ENCODE measurements at regions of chr7 and their contacts with region 1.

Region 1: GRCh38 chr7:47266131-47266706 is 315.7 kb downstream of the TNS3 start:
- DNase-seq: peak; percentile 49 to 73
- H3K4me3 ChIP-seq: no peak overlapping the region
- H3K27ac ChIP-seq: no peak overlapping the region
- H3K4me1 ChIP-seq: peaks cover 10% of the 10 kb centered on the region
- H3K27me3 ChIP-seq: no peaks in the 10 kb centered on the region
- CTCF ChIP-seq: peak; percentile 100

Region 2: DNA sequence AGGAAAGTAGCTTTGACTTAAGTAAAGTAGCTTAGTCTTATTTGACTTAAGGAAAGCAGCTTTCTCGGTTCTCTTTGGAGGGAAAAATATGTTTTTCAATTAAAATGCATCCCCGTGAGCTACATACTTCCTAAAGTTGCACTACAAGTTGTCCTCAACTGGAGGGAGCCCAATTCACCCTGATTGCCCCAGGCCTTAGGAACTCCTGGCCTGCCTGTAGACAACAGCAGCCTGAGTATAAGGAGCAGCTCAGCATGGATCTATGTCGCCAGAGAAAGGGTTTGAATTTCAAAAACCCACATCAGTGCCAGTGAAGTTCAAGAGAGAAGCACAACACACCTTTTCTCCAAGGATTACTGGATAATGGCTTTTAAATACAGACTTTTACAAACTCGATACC is 456.3 kb before region 1 on chr7:
- CTCF ChIA-PET with region 1: no interaction called
- POLR2A ChIA-PET with region 1: no interaction called
- intact Hi-C with region 1: no loop called
- DNase-seq: no peak
- H3K4me3 ChIP-seq: no peak overlapping the region
- H3K27ac ChIP-seq: no peak overlapping the region
- H3K4me1 ChIP-seq: no peaks in the 10 kb centered on the region; the same call in 1 of the 2 replicates
- H3K27me3 ChIP-seq: no peaks in the 10 kb centered on the region
- CTCF ChIP-seq: no peak

Region 3: GRCh38 chr7:47153076-47153475 is 113.1 kb before region 1 on chr7:
- CTCF ChIA-PET with region 1: no interaction called
- POLR2A ChIA-PET with region 1: no interaction called
- intact Hi-C with region 1: no loop called
- DNase-seq: peak; percentile 49 to 77
- H3K4me3 ChIP-seq: no peak overlapping the region
- H3K27ac ChIP-seq: no peak overlapping the region
- H3K4me1 ChIP-seq: peaks cover 14% of the 10 kb centered on the region
- H3K27me3 ChIP-seq: no peaks in the 10 kb centered on the region
- CTCF ChIP-seq: no peak

Region 4: DNA sequence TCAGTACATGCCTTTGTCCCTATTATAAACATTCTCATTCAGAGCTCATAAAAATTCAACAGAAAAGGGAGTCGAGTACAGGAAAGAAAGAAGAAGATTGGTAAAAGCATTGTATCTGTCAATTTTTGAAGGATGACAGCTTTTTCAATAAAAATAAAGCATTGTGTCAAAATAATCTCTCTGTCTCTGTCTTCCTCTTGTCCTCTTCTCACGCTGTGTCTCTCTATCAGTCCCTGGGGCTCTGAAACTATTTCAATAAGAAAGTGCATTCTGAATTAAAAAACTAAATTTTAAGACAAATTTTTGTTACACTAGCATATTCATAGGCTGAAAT is 67.3 kb after region 1 on chr7:
- CTCF ChIA-PET with region 1: no interaction called
- POLR2A ChIA-PET with region 1: no interaction called
- intact Hi-C with region 1: no loop called
- DNase-seq: no peak
- H3K4me3 ChIP-seq: no peak overlapping the region
- H3K27ac ChIP-seq: no peak overlapping the region
- H3K4me1 ChIP-seq: no peaks in the 10 kb centered on the region
- H3K27me3 ChIP-seq: no peaks in the 10 kb centered on the region
- CTCF ChIP-seq: no peak

Region 5: DNA sequence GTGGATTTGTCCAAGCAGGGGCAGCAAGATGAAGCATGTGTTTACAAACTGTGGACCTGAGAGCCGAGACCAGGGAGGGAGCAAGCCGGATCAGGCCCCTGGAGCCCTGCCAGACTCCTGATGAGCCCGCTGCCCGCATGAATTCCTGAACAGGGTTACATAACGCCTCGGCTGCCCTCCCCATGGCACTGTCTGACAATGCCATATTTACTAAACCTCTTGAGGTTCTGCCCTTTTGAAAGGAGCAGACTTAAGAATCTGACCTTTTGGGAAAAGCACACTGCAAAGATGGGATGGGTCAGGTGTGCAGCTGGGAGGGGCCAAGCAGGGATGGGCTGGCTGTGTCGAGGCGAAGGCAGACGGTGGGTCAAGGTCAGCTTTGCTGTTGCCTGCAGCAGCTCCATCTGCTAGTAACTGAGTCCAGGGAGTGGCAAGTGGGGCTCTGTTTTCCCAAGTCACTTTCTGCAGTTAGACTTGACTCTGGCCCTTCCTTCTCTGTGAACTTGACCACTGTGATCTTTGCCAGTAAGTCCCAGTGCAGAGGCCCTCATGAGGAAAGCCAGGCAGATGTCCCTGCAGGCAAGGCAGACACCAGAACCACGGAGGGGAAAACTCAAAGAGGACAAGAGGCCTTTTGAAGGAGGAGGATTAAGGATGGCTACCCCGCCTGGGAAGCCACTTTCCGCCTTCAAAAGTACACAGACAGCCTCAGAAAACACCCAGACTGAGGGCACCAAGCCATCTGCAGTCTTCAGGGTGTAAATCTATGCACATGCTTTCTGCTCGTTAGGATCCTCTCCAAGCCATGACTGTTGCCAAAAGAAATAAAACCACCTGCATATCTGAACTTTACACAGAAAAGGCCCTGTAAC is 139.9 kb after region 1 on chr7:
- CTCF ChIA-PET with region 1: interaction called, 3 read pairs
- POLR2A ChIA-PET with region 1: no interaction called
- intact Hi-C with region 1: loop called (anchors 10 kb)
- DNase-seq: peak in 1 of 2 experiments; percentile 87
- H3K4me3 ChIP-seq: no peak overlapping the region
- H3K27ac ChIP-seq: no peak overlapping the region
- H3K4me1 ChIP-seq: no peaks in the 10 kb centered on the region
- H3K27me3 ChIP-seq: no peaks in the 10 kb centered on the region
- CTCF ChIP-seq: no peak

Region 6: DNA sequence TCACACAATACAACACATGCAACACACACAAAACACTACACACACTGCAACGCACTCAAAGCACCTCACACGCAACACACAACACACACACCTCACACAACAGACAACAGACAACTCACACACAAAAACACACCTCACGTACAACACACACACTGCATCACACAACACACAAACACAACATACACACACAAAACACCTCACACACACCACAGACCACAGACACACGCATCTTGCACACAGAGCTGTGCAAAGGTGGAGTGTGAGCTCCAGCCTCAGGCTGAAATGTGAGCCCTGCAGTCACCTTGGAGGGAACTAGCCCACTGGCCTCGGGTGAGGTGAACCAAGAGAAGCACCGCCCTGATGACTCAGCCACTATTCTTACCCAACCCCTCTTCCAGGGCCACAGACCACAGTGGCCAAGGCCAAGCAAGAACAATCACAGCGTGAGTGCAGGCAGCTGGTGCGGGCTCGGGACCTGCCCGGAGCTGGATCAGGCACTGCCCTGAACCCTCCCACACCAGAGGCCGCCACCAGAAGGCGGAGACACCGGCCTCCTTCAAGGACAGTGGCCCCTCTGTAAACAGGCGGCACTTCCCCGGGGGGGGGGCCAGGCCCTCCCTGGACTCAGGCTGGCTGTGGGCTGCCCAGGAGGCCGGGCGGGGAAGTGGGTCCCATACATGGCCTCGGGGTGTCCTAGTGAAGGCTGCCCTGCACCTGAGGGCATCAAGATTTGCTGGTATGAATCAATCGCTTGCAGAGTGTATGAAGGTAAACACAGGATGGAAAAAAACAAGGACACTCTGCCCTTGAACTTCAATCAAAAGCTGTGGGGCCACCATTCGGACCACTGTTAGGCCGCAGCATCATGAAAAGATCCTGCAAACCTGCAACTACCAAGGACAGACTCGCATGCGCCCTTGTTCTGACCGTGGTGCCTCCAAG is 209.0 kb after region 1 on chr7:
- CTCF ChIA-PET with region 1: interaction called, 4 read pairs
- POLR2A ChIA-PET with region 1: no interaction called
- intact Hi-C with region 1: loop called (anchors 1 kb)
- DNase-seq: peak; percentile 99 to 100
- H3K4me3 ChIP-seq: peak overlapping the region; percentile 16; the same call in 1 of the 2 replicates
- H3K27ac ChIP-seq: peak overlapping the region; percentile 87
- H3K4me1 ChIP-seq: peaks cover 58% of the 10 kb centered on the region
- H3K27me3 ChIP-seq: no peaks in the 10 kb centered on the region
- CTCF ChIP-seq: no peak; the same call in 1 of the 2 replicates

Region 7: GRCh38 chr7:47937065-47937683 is 671.0 kb after region 1 on chr7:
- CTCF ChIA-PET with region 1: interaction called, 12 read pairs
- POLR2A ChIA-PET with region 1: no interaction called
- intact Hi-C with region 1: loop called (anchors 1 kb)
- DNase-seq: no peak
- H3K4me3 ChIP-seq: no peak overlapping the region
- H3K27ac ChIP-seq: no peak overlapping the region
- H3K4me1 ChIP-seq: peaks cover 19% of the 10 kb centered on the region
- H3K27me3 ChIP-seq: no peaks in the 10 kb centered on the region
- CTCF ChIP-seq: no peak

Region 8: DNA sequence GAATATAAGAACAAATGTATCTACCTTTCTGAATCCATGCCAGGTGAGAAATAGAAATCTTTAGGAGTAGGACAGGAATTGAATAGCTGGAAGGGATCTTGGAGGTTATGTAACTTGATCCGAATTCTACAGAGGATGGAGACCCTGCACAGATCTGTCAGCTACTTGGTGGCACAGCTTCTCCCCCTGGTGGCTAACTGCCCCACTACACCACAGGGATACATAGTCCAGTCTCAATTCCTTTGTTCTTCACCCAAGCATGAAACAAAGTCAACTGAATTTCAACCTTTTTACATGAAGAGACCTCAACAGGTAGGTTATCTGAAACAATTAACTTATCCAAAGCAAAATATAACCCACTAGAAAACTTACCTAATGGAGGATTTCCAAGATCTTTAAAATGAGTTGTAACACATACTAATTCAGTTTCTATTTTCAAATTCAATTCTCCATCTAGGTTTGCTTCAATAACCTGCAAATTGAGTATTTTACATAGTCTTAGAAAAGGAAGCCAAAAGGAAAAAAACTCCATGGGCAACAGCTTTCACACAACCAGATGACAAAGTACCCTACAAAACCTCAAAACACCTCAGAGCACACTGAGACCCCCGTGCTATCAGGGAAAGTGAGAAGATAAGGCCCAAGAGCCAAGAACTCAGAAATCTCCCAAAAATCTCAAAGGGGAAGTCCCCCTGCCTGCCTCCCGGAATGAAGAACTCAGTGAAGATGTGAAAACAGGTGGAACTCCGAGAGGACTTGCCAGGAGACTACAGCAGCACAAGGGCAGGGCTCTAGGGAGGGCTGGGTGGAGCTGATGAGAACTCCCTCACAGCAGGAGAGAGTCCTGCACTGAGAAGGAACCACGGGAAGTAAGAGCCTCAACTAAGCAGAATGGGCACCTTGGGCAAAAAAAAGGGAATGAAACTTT is 702.9 kb after region 1 on chr7:
- CTCF ChIA-PET with region 1: interaction called, 7 read pairs
- POLR2A ChIA-PET with region 1: no interaction called
- intact Hi-C with region 1: loop called (anchors 1 kb)
- DNase-seq: peak; percentile 64 to 66
- H3K4me3 ChIP-seq: no peak overlapping the region
- H3K27ac ChIP-seq: 0 out of 2 replicates have a peak overlapping the region, but pooled peaks have one; percentile 0
- H3K4me1 ChIP-seq: peaks cover 11% of the 10 kb centered on the region
- H3K27me3 ChIP-seq: no peaks in the 10 kb centered on the region
- CTCF ChIP-seq: peak; percentile 99

Measured in PC-9 (cell line).